ENCODE measurements at regions of chr7 and their contacts with region 1.

Region 1: GRCh38 chr7:140479062-140479738 is at the start of gene MKRN1:
- DNase-seq: peak; percentile 98
- H3K4me3 Mint-ChIP-seq: peak within 1 kb of the TSS; percentile 99
- H3K27ac Mint-ChIP-seq: peak within 1 kb of the TSS; percentile 97
- H3K4me1 Mint-ChIP-seq: peaks cover 26% of the 10 kb centered on the region
- H3K27me3 Mint-ChIP-seq: peaks cover 13% of the 10 kb centered on the region
- total RNA-seq, gene MKRN1: 59.7 and 67.5 TPM in 2 replicates

Region 2: DNA sequence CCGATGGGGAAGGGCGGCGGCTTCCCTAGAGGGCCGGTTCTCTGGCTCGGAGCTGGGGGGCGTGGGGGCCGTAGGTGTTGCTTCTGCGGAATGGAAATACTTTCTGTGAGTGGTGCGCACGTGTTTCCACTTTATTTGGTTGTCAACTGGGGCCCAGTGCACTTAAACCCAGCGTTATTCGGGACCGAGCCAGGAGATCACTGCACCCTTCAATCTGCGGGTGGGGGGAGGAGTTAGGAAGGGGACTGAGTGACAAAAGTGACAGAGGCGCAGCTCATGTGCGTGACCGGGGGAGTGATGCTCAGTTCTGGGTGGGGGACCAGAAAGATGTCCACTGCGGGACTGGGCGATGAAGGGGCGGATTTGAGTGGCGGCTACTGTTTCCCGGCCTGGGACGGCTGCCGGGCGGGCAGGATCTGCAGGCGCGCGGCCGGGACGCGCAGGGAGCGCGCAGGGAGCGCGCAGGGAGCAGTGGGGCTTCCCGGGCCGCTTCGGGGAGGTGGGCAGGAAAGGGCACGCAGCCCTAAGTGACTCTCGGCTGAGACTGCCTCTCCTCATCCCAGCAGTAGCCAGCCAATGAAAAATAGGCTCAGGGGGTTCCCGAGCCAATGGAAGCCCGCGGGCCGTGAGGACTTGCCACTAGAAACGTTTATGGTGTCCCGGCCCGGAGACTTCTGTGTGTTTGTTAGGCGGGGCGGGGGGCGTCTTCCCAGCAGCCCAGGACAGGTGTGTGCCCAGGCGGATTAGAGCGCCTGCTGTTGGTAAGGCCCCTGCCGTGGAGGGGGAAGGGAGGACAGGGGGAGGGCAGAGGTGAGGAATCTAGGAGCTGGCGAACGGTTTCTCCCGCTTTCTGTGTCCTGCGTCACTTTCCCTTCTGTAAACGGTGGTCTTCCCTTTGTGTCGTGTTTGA is 248.1 kb before region 1 on chr7:
- intact Hi-C with region 1: loop called (anchors 1 kb)
- DNase-seq: peak; percentile 86
- H3K4me3 Mint-ChIP-seq: peak overlapping the region; percentile 96
- H3K27ac Mint-ChIP-seq: peak overlapping the region; percentile 98
- H3K4me1 Mint-ChIP-seq: peaks cover 33% of the 10 kb centered on the region
- H3K27me3 Mint-ChIP-seq: no peaks in the 10 kb centered on the region

Region 3: GRCh38 chr7:140375892-140376730 is 103.1 kb before region 1 on chr7:
- intact Hi-C with region 1: loop called (anchors 1 kb)
- DNase-seq: peak; percentile 84
- H3K4me3 Mint-ChIP-seq: peak overlapping the region; percentile 78
- H3K27ac Mint-ChIP-seq: peak overlapping the region; percentile 99
- H3K4me1 Mint-ChIP-seq: peaks cover 40% of the 10 kb centered on the region
- H3K27me3 Mint-ChIP-seq: no peaks in the 10 kb centered on the region

Region 4: DNA sequence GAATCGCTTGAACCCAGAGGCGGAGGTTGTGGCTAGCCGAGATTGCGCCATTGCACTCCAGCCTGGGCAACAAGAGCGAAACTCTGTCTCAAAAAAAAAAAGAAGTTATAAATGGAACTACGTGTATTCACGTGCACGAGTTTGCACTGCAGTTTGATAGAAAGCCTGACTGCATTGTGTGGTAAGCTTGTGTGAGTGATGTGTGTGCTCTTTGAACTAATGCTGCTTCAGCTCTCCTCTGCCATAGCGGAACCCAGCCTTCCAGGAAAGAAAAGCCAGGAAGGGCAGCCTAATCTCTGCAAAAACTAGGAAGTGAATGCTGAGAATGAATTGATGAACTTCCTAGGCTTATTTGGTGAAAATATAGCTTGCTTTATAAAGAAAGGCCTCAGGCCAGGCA is 15.7 kb after region 1 on chr7:
- intact Hi-C with region 1: loop called (anchors 1 kb)
- DNase-seq: no peak
- H3K4me3 Mint-ChIP-seq: no peak overlapping the region
- H3K27ac Mint-ChIP-seq: no peak overlapping the region
- H3K4me1 Mint-ChIP-seq: no peaks in the 10 kb centered on the region
- H3K27me3 Mint-ChIP-seq: peaks cover 3% of the 10 kb centered on the region

Region 5: GRCh38 chr7:140673063-140673773 is 194.0 kb after region 1 on chr7:
- intact Hi-C with region 1: loop called (anchors 2 kb)
- DNase-seq: peak; percentile 90
- H3K4me3 Mint-ChIP-seq: peak overlapping the region; percentile 89
- H3K27ac Mint-ChIP-seq: peak overlapping the region; percentile 87
- H3K4me1 Mint-ChIP-seq: peaks cover 31% of the 10 kb centered on the region
- H3K27me3 Mint-ChIP-seq: peaks cover 4% of the 10 kb centered on the region

Measured in activated CD4-positive, alpha-beta T cell treated with anti-CD3 and anti-CD28 coated beads, Interleukin-2, amount 10 ng/mL, durations not matched to agents 24 days and 14 days (primary cell).